T-cell (primary cell): ENCODE measurements at regions of chr19 and their contacts with region 1.

Region 1: DNA sequence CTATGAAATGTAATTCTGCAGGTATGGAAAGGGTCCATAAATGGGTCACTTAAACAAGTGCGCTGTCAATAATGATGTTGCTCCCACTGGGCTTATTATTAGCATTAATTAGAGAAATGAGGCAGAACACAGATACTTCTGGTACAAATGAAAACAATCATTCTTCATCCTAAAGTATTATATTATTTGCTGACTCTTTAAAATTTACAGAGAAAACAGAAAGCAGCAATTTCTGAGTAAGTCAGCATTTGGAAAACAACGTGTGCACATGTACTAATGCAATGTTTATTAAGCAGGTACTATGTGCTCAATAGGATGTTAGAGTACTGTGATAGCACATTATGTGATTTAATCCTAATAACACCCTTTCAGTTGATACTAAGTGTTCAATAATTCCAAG is 2.4 kb upstream of the ZNF676 start:
- DNase-seq: no peak
- ATAC-seq: no peak
- H3K4me3 ChIP-seq: no peak overlapping the region
- H3K4me3 Mint-ChIP-seq: no peak overlapping the region
- H3K27ac ChIP-seq: no peak overlapping the region
- H3K27ac Mint-ChIP-seq: no peak overlapping the region
- H3K4me1 ChIP-seq: no peaks in the 10 kb centered on the region
- H3K4me1 Mint-ChIP-seq: no peaks in the 10 kb centered on the region
- H3K27me3 ChIP-seq: no peaks in the 10 kb centered on the region
- H3K27me3 Mint-ChIP-seq: no peaks in the 10 kb centered on the region

Region 2: GRCh38 chr19:23249911-23250649 is 1050.9 kb after region 1 on chr19 and contains the start of gene ZNF724:
- CTCF ChIA-PET with region 1: no interaction called
- POLR2A ChIA-PET with region 1: interaction called in 1 of 2 experiments, 12 read pairs
- DNase-seq: peak; percentile 74 to 93 (median 87)
- ATAC-seq: peak; percentile 99 to 100 (median 100)
- H3K4me3 ChIP-seq: peak within 1 kb of the TSS; percentile 90 to 91
- H3K4me3 Mint-ChIP-seq: peak within 1 kb of the TSS; percentile 92 to 99 (median 97)
- H3K27ac ChIP-seq: peak within 1 kb of the TSS; percentile 64
- H3K27ac Mint-ChIP-seq: peak within 1 kb of the TSS; percentile 85 to 89
- H3K4me1 ChIP-seq: peaks cover 2 to 10% of the 10 kb centered on the region in 2 experiments
- H3K4me1 Mint-ChIP-seq: peaks cover 8 to 15% (median 11%) of the 10 kb centered on the region in 3 donors
- H3K27me3 ChIP-seq: no peaks in the 10 kb centered on the region
- H3K27me3 Mint-ChIP-seq: no peaks in the 10 kb centered on the region
- total RNA-seq, gene ZNF724: 3.3 to 6.5 (median 6.0) TPM